ENCODE measurements at regions of chr11 and their contacts with region 1.

Region 1: DNA sequence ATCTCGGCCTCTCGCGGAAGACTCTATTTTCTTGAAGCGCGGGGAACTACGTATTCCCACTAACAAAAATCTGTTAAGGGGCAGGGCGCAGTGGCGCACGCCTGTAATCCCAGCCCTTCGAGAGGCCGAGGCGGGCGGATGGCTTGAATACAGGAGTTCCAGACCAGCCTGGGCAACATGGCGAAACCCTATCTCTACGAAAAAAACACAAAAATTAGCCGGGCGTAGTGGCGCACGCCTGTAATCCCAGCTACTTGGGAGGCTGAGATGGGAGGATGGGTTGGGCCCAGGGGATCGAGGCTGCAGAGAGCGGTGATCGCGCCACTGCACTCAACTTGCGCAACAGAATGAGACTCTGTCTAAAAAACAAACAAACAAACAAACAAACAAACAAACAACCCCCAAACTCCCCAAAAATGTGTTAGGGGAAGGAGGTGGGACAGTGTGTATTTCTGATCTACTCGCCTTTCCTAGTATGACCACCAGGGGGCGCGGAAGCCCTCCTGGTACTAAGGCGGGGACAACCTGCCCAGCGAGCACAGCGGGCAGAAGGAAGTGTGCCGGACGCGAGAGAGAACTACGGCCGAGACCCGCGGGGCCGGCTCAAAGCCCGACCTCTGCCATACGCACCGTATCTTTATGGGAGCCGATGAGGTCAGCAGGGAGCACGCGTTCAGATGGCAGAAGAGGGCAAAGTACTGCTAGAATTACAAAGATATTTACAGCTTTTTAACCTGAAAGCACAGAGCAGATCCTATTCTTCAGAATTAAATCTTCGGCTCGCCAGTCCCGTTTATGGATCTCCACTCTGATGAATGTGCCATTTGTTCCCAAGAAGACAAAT is 1.3 kb upstream of the STX3 start:
- DNase-seq: peak; percentile 65 to 84 (median 75)
- ATAC-seq: peak; percentile 80
- H3K4me3 ChIP-seq: peak overlapping the region; percentile 91
- H3K4me3 Mint-ChIP-seq: peak overlapping the region; percentile 90 to 98 (median 95)
- H3K27ac ChIP-seq: peak overlapping the region; percentile 61
- H3K27ac Mint-ChIP-seq: peak overlapping the region; percentile 32 to 88 (median 71)
- H3K4me1 ChIP-seq: peaks cover 8 to 12% of the 10 kb centered on the region in 2 donors
- H3K4me1 Mint-ChIP-seq: peaks cover 11 to 35% (median 23%) of the 10 kb centered on the region in 7 donors
- H3K27me3 ChIP-seq: no peaks in the 10 kb centered on the region
- H3K27me3 Mint-ChIP-seq: peaks cover 6 to 15% (median 10%) of the 10 kb centered on the region in 5 donors

Region 2: GRCh38 chr11:59542142-59542810 is 211.6 kb before region 1 on chr11:
- CTCF ChIA-PET with region 1: no interaction called
- POLR2A ChIA-PET with region 1: no interaction called
- intact Hi-C with region 1: loop called (anchors 1 to 5 kb)
- DNase-seq: no peak
- ATAC-seq: no peak
- H3K4me3 ChIP-seq: no peak overlapping the region
- H3K4me3 Mint-ChIP-seq: no peak overlapping the region
- H3K27ac ChIP-seq: no peak overlapping the region
- H3K27ac Mint-ChIP-seq: no peak overlapping the region
- H3K4me1 ChIP-seq: no peaks in the 10 kb centered on the region
- H3K4me1 Mint-ChIP-seq: peaks cover 7 to 9% (median 8%) of the 10 kb centered on the region in 7 donors
- H3K27me3 ChIP-seq: no peaks in the 10 kb centered on the region
- H3K27me3 Mint-ChIP-seq: peaks cover 0 to 6% (median 0%) of the 10 kb centered on the region in 5 donors

Region 3: DNA sequence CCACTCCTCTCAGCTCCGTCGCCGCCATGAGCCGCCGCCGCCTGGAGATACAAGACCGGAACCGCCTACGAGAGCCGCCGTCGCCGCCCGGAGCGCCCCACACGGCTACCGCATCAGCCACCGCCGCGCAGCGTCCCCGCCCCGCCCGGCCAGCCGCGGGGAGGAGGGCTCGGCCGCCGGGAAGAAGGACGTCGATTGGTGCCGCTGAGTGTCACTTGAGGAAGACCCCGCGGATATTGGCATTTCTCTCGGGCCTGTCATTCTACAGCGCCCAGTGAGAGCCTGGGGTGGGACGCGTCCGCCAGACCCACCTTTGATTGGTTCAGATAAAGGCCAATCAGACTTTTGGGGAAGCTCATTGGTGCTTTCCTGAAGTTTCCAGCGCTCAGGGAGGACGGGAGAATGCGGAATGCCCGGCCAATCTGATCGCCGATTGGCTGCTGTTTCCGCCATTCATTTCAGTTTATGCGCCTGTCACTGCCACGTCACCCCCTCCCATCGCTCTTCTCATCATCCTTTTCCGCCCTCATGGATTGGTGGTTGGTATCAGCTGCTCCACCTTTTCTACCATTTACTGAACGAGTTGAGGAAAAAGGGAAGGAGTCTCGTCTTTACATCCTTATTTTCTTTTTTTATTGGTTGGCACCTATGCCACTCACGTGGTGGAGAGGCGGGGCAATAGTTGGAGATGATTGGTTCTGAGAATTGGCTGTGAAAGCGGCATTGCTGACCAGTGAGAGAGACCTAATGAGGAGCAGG is 138.1 kb before region 1 on chr11 and contains the start of gene OSBP:
- CTCF ChIA-PET with region 1: no interaction called
- POLR2A ChIA-PET with region 1: no interaction called
- intact Hi-C with region 1: loop called (anchors 1 kb)
- DNase-seq: peak; percentile 86 to 100 (median 99)
- ATAC-seq: peak; percentile 84
- H3K4me3 ChIP-seq: peak within 1 kb of the TSS; percentile 72
- H3K4me3 Mint-ChIP-seq: peak within 1 kb of the TSS; percentile 82 to 99 (median 94)
- H3K27ac ChIP-seq: peak within 1 kb of the TSS; percentile 93
- H3K27ac Mint-ChIP-seq: peak within 1 kb of the TSS; percentile 84 to 98 (median 94)
- H3K4me1 ChIP-seq: peaks cover 26 to 29% of the 10 kb centered on the region in 2 donors
- H3K4me1 Mint-ChIP-seq: peaks cover 35 to 54% (median 41%) of the 10 kb centered on the region in 7 donors
- H3K27me3 ChIP-seq: no peaks in the 10 kb centered on the region
- H3K27me3 Mint-ChIP-seq: no peaks in the 10 kb centered on the region
- total RNA-seq, gene OSBP: 39.8 to 57.6 (median 52.4) TPM

Region 4: DNA sequence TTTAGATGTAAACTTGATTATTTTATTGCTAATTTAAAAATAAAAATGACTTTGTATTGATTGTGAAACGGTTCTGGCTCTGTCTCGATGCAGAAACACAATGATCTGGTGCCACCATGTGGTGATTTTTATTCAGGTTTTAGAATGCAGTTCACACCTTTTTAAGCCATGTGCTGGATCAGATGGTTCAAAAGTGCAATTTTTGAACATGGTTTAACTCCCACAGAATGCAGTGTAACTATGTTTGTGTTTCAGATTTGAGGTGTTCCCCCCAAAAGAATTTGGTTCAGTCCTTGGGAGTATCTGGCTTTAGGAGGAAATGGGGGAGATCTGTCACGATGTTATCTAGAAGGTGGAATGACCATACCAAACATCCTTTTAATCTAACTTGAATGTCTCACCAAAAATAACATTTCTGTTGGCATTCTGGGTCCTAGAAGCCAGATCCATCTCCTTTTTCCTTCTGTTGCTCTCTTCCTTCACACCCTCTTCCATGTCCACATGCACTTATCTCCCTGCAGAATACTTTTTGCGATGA is 48.8 kb after region 1 on chr11:
- CTCF ChIA-PET with region 1: interaction called, 79 read pairs
- POLR2A ChIA-PET with region 1: interaction called, 24 read pairs
- intact Hi-C with region 1: loop called (anchors 1 kb)
- DNase-seq: peak in 7 of 9 donors; percentile 43 to 70 (median 65)
- ATAC-seq: peak; percentile 81
- H3K4me3 ChIP-seq: no peak overlapping the region
- H3K4me3 Mint-ChIP-seq: no peak overlapping the region
- H3K27ac ChIP-seq: no peak overlapping the region
- H3K27ac Mint-ChIP-seq: peak overlapping the region in 1 of 9 donors; percentile 45
- H3K4me1 ChIP-seq: no peaks in the 10 kb centered on the region
- H3K4me1 Mint-ChIP-seq: peaks cover 0 to 26% (median 0%) of the 10 kb centered on the region in 7 donors
- H3K27me3 ChIP-seq: no peaks in the 10 kb centered on the region
- H3K27me3 Mint-ChIP-seq: no peaks in the 10 kb centered on the region

Region 5: DNA sequence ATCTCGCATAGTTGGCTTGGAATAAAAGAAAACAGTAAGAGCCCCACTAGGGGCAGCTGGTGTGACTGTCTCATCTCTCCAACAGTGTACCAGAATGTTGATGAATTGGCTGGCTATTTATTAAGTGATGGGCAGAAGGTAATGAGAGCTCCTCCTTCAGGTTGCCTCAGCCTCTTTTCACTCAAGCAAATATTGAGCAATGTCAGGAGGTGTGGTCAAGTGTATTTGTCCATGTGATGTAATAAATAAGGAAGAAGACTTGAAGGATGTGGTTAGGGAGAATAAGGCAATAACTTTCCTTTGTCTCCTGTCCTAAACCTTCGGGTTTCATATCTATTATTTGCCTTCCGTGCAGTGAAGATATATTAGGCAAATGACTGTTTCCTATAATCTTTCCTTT is 112.5 kb after region 1 on chr11 and contains the start of gene TCN1:
- CTCF ChIA-PET with region 1: no interaction called
- POLR2A ChIA-PET with region 1: no interaction called
- intact Hi-C with region 1: no loop called
- DNase-seq: no peak
- ATAC-seq: peak; percentile 65
- H3K4me3 ChIP-seq: no peak within 1 kb of the TSS
- H3K4me3 Mint-ChIP-seq: no peak within 1 kb of the TSS
- H3K27ac ChIP-seq: no peak within 1 kb of the TSS
- H3K27ac Mint-ChIP-seq: no peak within 1 kb of the TSS
- H3K4me1 ChIP-seq: no peaks in the 10 kb centered on the region
- H3K4me1 Mint-ChIP-seq: peaks cover 0 to 3% (median 0%) of the 10 kb centered on the region in 7 donors
- H3K27me3 ChIP-seq: no peaks in the 10 kb centered on the region
- H3K27me3 Mint-ChIP-seq: peaks cover 13 to 27% (median 21%) of the 10 kb centered on the region in 5 donors
- total RNA-seq, gene TCN1: 3.4 to 3.8 TPM in 2 of 5 experiments, not detected in the others

Region 6: GRCh38 chr11:59918987-59919589 is 165.2 kb after region 1 on chr11:
- CTCF ChIA-PET with region 1: interaction called, 3 read pairs
- POLR2A ChIA-PET with region 1: no interaction called
- intact Hi-C with region 1: loop called (anchors 2 kb)
- DNase-seq: no peak
- ATAC-seq: no peak
- H3K4me3 ChIP-seq: no peak overlapping the region
- H3K4me3 Mint-ChIP-seq: no peak overlapping the region
- H3K27ac ChIP-seq: no peak overlapping the region
- H3K27ac Mint-ChIP-seq: no peak overlapping the region
- H3K4me1 ChIP-seq: no peaks in the 10 kb centered on the region
- H3K4me1 Mint-ChIP-seq: peaks cover 0 to 2% (median 0%) of the 10 kb centered on the region in 7 donors
- H3K27me3 ChIP-seq: no peaks in the 10 kb centered on the region
- H3K27me3 Mint-ChIP-seq: peaks cover 0 to 15% (median 5%) of the 10 kb centered on the region in 5 donors

Measured in naive thymus-derived CD4-positive, alpha-beta T cell (primary cell).